ENCODE measurements at regions of chr7 and their contacts with region 1.

Region 1: GRCh38 chr7:83060218-83060617 is 102.5 kb downstream of the PCLO start:
- DNase-seq: no peak
- H3K4me3 ChIP-seq: no peak overlapping the region
- H3K27ac ChIP-seq: no peak overlapping the region
- H3K4me1 ChIP-seq: no peaks in the 10 kb centered on the region
- H3K27me3 ChIP-seq: no peaks in the 10 kb centered on the region
- CTCF ChIP-seq: no peak

Region 2: GRCh38 chr7:82897500-82897899 is 162.7 kb before region 1 on chr7:
- CTCF ChIA-PET with region 1: no interaction called
- dilution Hi-C with region 1: no loop called
- in situ Hi-C with region 1: no loop called
- intact Hi-C with region 1: no loop called
- DNase-seq: peak; percentile 16
- H3K4me3 ChIP-seq: no peak overlapping the region
- H3K27ac ChIP-seq: no peak overlapping the region
- H3K4me1 ChIP-seq: no peaks in the 10 kb centered on the region
- H3K27me3 ChIP-seq: no peaks in the 10 kb centered on the region
- CTCF ChIP-seq: no peak

Region 3: GRCh38 chr7:83130623-83131545 is 70.7 kb after region 1 on chr7:
- CTCF ChIA-PET with region 1: no interaction called
- dilution Hi-C with region 1: loop called (anchors 10 kb)
- in situ Hi-C with region 1: no loop called
- intact Hi-C with region 1: no loop called
- DNase-seq: no peak
- H3K4me3 ChIP-seq: no peak overlapping the region
- H3K27ac ChIP-seq: no peak overlapping the region
- H3K4me1 ChIP-seq: no peaks in the 10 kb centered on the region
- H3K27me3 ChIP-seq: no peaks in the 10 kb centered on the region
- CTCF ChIP-seq: no peak